Naive thymus-derived CD4-positive, alpha-beta T cell (primary cell): ENCODE measurements at regions of chrX and their contacts with region 1.

Region 1: DNA sequence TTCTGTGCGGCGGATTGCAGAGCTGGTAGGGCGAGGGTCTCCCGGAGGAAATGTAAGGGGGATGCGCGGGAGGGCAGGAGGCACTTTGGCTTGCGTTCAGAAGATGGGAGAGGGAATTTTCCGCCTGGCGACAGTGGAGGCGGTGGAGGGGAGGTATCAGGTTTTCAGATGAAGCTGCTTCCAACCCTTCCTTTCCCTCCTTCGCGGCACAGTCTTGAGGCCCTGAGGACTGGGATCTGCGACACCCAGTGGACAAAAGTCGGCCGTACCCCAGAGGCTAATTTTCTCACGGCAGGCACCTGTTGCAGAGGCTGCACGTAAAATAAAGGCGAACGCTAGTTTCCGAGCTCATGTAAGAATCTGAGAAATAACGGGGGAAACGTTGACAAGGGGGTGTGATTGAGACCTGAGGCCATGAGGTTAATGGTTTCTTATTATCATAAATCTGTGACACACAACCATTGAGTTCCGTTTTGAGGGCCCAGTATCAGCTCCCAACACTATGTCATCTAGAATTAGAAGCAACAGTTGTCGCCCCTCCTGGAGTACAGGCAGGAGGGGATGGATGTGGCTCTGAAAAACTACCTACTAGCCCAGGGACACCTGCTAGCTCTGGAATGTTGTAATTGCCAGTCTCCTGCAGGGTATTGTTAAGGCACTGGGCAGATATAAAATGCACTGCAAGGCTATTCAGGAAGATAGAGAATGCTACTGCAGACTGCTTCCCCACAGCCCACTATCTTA is 1.1 kb downstream of the ZCCHC18 start:
- DNase-seq: peak in 8 of 9 donors; percentile 17 to 43 (median 35)
- ATAC-seq: peak; percentile 71
- H3K4me3 ChIP-seq: peak overlapping the region; percentile 79
- H3K4me3 Mint-ChIP-seq: peak overlapping the region; percentile 74 to 93 (median 90)
- H3K27ac ChIP-seq: peak overlapping the region; percentile 67
- H3K27ac Mint-ChIP-seq: peak overlapping the region; percentile 28 to 81 (median 65)
- H3K4me1 ChIP-seq: peaks cover 17 to 25% of the 10 kb centered on the region in 2 donors
- H3K4me1 Mint-ChIP-seq: peaks cover 0 to 35% (median 27%) of the 10 kb centered on the region in 7 donors
- H3K27me3 ChIP-seq: no peaks in the 10 kb centered on the region
- H3K27me3 Mint-ChIP-seq: peaks cover 0 to 8% (median 0%) of the 10 kb centered on the region in 5 donors

Region 2: DNA sequence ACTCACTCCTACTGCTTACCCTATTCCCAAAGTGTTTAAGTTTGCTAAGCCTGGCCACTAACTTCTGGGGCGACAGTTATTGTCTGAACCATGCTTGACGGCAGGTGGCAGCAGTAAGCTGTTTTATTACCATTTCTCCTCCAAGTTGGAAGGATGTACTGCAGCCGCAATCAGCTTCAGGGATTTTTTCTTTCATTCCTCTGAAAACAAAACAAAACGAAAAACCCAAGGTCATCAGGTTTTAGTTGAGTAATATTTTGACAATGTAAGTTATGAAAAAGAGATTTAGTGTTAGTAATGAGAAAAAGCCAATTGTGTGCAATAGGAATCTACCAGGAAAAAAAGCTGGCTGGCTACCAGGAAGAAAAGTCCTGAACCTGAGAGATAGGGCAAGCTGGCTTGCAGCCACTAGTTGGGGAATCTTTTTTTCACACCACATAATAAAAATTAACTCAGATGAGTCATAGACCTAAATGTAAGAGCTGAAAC is 268.2 kb before region 1 on chrX:
- CTCF ChIA-PET with region 1: no interaction called
- POLR2A ChIA-PET with region 1: no interaction called
- intact Hi-C with region 1: loop called in 1 of 2 experiments (anchors 1 kb)
- DNase-seq: peak in 7 of 9 donors; percentile 8 to 33 (median 25)
- ATAC-seq: no peak
- H3K4me3 ChIP-seq: no peak overlapping the region
- H3K4me3 Mint-ChIP-seq: no peak overlapping the region
- H3K27ac ChIP-seq: no peak overlapping the region
- H3K27ac Mint-ChIP-seq: no peak overlapping the region
- H3K4me1 ChIP-seq: no peaks in the 10 kb centered on the region
- H3K4me1 Mint-ChIP-seq: no peaks in the 10 kb centered on the region
- H3K27me3 ChIP-seq: no peaks in the 10 kb centered on the region
- H3K27me3 Mint-ChIP-seq: peaks cover 0 to 5% (median 0%) of the 10 kb centered on the region in 5 donors

Region 3: DNA sequence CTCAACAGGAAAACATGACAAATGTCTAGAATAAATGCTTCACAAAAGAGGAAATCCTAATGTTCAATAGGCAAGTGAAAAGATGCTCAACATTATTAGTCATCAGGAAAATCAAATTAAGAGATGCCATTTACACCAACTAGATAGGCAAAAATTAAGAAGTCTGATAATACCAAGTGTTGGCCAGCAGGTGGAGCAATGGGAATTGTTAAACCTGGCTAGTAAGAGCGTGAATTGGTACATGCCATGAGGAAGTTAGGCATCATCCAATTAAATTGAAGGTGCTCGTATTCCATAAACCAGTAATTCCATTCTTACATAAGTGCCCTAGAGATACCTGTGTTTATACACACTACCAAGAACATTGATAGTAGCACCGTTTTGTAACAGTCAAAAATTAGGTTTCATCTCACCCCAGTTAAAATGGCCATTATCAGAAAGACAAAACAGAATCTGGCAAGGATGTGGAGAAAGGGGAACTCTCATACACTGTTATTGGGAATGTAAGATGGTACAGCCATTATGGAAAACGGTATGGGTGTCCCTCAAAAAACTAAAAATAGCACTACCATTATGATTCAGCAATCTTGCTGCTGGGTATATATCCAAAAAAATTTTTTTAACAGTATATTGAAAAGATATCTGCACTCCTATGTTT is 15.1 kb before region 1 on chrX:
- CTCF ChIA-PET with region 1: interaction called, 18 read pairs
- POLR2A ChIA-PET with region 1: interaction called, 4 read pairs
- intact Hi-C with region 1: loop called (anchors 1 kb)
- DNase-seq: peak in 7 of 9 donors; percentile 30 to 65 (median 54)
- ATAC-seq: peak; percentile 81
- H3K4me3 ChIP-seq: no peak overlapping the region
- H3K4me3 Mint-ChIP-seq: no peak overlapping the region
- H3K27ac ChIP-seq: no peak overlapping the region
- H3K27ac Mint-ChIP-seq: no peak overlapping the region
- H3K4me1 ChIP-seq: no peaks in the 10 kb centered on the region
- H3K4me1 Mint-ChIP-seq: no peaks in the 10 kb centered on the region
- H3K27me3 ChIP-seq: no peaks in the 10 kb centered on the region
- H3K27me3 Mint-ChIP-seq: peaks cover 0 to 27% (median 0%) of the 10 kb centered on the region in 5 donors

Region 4: DNA sequence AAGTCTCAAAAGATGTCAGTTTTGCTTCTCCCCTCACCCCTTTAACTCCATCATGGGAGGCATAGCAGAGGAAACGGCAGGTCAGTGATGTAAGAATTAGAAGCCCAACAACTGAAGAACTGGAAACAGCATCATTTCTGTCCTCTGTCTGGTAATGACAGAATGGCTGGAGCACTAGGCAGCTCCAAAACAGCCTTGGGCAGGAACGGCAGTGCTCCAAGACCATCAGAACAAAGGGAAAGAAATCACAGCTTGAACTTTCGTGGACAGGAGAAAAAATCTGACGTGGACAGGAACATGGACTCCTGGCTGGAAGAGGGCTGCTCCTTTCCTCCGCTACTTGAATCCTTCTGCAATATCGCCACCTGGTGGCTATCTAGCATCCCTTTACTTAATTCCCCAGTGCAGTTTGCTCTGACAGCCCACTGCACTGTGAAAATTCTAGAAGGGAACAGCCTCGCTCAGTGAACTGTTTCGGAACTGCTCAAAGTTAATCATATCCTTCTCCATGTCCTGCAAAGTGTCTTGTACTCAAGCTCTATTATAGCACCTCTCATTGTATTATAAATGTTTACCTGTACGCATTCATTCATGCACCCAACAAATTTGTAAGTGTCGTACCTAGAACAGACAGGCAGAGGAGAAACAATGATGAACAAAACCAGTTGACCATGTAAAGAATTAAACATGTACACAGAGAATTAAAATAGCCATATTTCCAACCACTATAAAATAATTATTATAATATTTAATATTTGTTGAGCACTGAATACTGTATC is 23.0 kb after region 1 on chrX:
- CTCF ChIA-PET with region 1: interaction called, 3 read pairs
- POLR2A ChIA-PET with region 1: no interaction called
- intact Hi-C with region 1: loop called (anchors 1 kb)
- DNase-seq: peak in 8 of 9 donors; percentile 28 to 62 (median 49)
- ATAC-seq: peak; percentile 81
- H3K4me3 ChIP-seq: no peak overlapping the region
- H3K4me3 Mint-ChIP-seq: peak overlapping the region in 1 of 10 donors; percentile 25
- H3K27ac ChIP-seq: no peak overlapping the region
- H3K27ac Mint-ChIP-seq: no peak overlapping the region
- H3K4me1 ChIP-seq: peaks cover 0 to 6% of the 10 kb centered on the region in 2 donors
- H3K4me1 Mint-ChIP-seq: peaks cover 13 to 31% (median 21%) of the 10 kb centered on the region in 7 donors
- H3K27me3 ChIP-seq: no peaks in the 10 kb centered on the region
- H3K27me3 Mint-ChIP-seq: no peaks in the 10 kb centered on the region

Region 5: GRCh38 chrX:104156630-104157529 is 43.5 kb after region 1 on chrX and contains the start of gene SLC25A53:
- CTCF ChIA-PET with region 1: no interaction called
- POLR2A ChIA-PET with region 1: interaction called, 7 read pairs
- intact Hi-C with region 1: loop called (anchors 2 to 5 kb)
- DNase-seq: peak; percentile 53 to 81 (median 71)
- ATAC-seq: peak; percentile 91
- H3K4me3 ChIP-seq: peak within 1 kb of the TSS; percentile 87
- H3K4me3 Mint-ChIP-seq: peak within 1 kb of the TSS; percentile 87 to 100 (median 98)
- H3K27ac ChIP-seq: peak within 1 kb of the TSS; percentile 85
- H3K27ac Mint-ChIP-seq: peak within 1 kb of the TSS; percentile 97 to 100 (median 99)
- H3K4me1 ChIP-seq: no peaks in the 10 kb centered on the region
- H3K4me1 Mint-ChIP-seq: peaks cover 6 to 25% (median 15%) of the 10 kb centered on the region in 7 donors
- H3K27me3 ChIP-seq: no peaks in the 10 kb centered on the region
- H3K27me3 Mint-ChIP-seq: no peaks in the 10 kb centered on the region
- total RNA-seq, gene SLC25A53: 7.2 to 18.9 (median 10.4) TPM

Region 6: DNA sequence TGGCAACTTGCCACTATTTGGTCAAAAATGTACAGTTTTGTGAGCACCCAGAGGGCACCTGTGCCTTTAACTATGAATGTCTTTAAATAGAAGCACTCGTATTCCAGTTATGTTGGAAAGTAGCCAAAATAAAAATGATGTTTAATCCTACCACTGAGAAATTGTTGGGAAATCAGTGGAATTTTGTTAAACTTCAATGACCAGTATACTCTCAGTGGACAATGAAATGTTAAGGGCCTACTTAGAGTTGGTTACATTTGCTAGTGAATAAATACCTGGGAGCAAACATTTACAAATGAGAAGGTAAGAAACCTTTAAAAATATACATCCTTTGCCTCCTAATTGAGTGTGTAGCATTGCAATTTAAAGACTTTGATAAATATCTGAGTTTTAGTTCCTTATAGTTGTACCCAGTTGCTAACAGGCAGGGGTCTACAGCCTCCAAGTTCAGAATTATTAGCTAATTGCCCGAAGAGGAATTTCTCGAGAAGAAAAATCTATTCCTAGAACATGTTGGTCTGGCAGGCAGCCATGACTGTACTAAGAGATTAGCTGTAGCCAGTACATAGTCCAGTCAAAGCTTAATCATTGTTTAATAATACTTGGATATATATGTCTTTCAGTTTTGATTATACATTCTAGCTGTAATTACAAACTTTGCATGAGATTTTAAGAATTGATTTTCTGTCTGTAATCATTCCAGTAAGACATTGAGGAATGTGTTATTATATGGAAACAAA is 545.8 kb after region 1 on chrX:
- CTCF ChIA-PET with region 1: no interaction called
- POLR2A ChIA-PET with region 1: no interaction called
- intact Hi-C with region 1: no loop called
- DNase-seq: no peak
- ATAC-seq: no peak
- H3K4me3 ChIP-seq: no peak overlapping the region
- H3K4me3 Mint-ChIP-seq: no peak overlapping the region
- H3K27ac ChIP-seq: no peak overlapping the region
- H3K27ac Mint-ChIP-seq: no peak overlapping the region
- H3K4me1 ChIP-seq: no peaks in the 10 kb centered on the region
- H3K4me1 Mint-ChIP-seq: no peaks in the 10 kb centered on the region
- H3K27me3 ChIP-seq: no peaks in the 10 kb centered on the region
- H3K27me3 Mint-ChIP-seq: peaks cover 0 to 5% (median 0%) of the 10 kb centered on the region in 5 donors